Kidney (tissue), 22 donors: ENCODE measurements at regions of chr19 and their contacts with region 1.

Region 1: GRCh38 chr19:19053508-19054314 is 10.1 kb upstream of the SLC25A42 start:
- DNase-seq: peak in 4 of 5 donors; percentile 67 to 80 (median 75)
- H3K4me3 ChIP-seq: no peak overlapping the region
- H3K27ac ChIP-seq: no peak overlapping the region
- H3K4me1 ChIP-seq: peaks cover 0 to 5% (median 0%) of the 10 kb centered on the region in 3 donors
- H3K27me3 ChIP-seq: no peaks in the 10 kb centered on the region
- CTCF ChIP-seq: peak; percentile 82

Region 2: DNA sequence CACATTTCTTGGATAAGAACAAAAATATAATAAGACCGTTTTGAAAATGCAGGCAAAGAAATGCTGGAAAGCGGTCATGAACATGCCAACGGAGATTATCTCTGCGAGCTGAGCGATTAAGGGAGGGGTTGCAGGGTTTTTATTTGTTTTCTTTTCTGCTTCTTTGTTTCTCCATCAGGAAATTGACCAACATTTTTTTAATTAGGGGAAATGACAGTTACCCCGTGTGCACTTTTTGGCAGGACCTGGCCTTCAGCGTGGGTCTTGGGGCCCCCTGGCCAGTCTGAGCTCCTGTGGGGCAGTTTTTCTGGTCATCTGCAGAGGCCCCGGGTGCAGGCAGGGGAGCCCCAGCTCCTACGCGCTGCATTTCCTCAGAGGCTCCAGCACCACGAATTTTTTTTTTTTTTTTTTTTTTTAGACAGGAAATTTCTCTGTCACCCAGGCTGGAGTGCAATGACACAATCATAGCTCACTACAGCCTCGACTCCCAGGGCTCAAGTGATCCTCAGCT is 81.4 kb before region 1 on chr19:
- intact Hi-C with region 1: no loop called
- DNase-seq: peak in 1 of 5 donors; percentile 12
- H3K4me3 ChIP-seq: no peak overlapping the region
- H3K27ac ChIP-seq: peak overlapping the region in 1 of 2 donors; percentile 80
- H3K4me1 ChIP-seq: peaks cover 0 to 6% (median 2%) of the 10 kb centered on the region in 3 donors
- H3K27me3 ChIP-seq: no peaks in the 10 kb centered on the region
- CTCF ChIP-seq: no peak

Region 3: GRCh38 chr19:19138169-19138981 is 84.7 kb after region 1 on chr19 and contains the start of gene TMEM161A:
- intact Hi-C with region 1: loop called (anchors 10 kb)
- DNase-seq: peak; percentile 98 to 99 (median 98)
- H3K4me3 ChIP-seq: peak within 1 kb of the TSS; percentile 87 to 98 (median 98)
- H3K27ac ChIP-seq: peak within 1 kb of the TSS in 1 of 2 donors; percentile 72
- H3K4me1 ChIP-seq: peaks cover 0 to 7% (median 7%) of the 10 kb centered on the region in 3 donors
- H3K27me3 ChIP-seq: no peaks in the 10 kb centered on the region
- CTCF ChIP-seq: no peak
- total RNA-seq, gene TMEM161A: 23.9 TPM